HEK293T (cell line): ENCODE measurements at regions of chr21 and their contacts with region 1.

Region 1: DNA sequence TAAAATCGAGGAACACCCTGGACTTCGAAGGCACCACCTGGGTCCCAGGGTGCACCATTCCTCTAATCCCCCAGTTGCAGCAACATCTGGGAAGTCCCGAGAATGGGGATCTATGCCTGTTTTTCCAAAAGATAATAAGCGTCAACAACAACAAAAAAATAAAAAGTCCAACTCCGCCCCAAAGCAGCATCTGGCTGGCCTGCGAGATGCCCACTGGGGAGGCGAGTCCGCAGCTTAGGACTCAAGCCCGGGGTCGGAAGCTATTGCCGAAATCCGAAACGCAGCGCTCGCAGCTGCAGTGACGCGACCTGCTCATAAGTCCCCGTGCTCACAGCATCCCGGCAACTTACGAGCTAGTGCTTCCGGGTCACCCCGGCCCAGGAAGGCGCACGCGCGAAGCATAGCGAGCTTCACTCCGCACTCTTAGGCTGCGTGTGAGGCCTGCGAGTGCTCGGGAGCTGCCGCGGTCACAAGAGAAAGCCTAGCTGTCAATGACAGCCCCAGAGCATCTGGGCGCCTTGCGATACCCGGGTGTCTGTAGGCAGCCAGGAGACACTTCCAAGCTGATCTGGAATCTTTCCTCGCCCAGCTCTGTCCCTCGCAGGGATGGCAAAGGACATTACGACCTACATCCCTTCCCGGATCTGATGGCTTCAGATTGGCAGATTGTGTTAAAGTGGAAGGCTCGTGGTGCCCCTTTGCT is 9.9 kb upstream of the LTN1 start:
- DNase-seq: peak; percentile 98

Region 2: DNA sequence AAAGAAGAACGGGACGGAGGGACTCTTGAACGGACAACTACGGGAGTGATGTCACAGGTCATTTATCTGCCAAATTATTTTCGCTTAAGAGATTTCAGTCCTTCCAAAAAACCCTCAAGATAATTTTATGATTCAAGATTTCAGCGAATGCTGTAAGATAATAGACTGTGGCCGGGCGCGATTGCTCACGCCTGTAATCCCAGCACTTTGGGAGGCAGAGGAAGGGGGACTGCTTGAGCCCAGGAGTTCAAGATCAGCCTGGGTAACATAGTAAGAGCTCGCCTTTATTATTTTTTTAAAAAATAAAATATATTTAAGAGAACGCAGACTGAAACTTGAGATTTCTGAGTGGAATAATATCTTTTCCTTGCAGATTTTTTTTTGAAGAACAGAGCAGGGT is 15.9 kb after region 1 on chr21:
- CTCF ChIA-PET with region 1: no interaction called
- POLR2A ChIA-PET with region 1: interaction called, 65 read pairs
- DNase-seq: no peak

Region 3: DNA sequence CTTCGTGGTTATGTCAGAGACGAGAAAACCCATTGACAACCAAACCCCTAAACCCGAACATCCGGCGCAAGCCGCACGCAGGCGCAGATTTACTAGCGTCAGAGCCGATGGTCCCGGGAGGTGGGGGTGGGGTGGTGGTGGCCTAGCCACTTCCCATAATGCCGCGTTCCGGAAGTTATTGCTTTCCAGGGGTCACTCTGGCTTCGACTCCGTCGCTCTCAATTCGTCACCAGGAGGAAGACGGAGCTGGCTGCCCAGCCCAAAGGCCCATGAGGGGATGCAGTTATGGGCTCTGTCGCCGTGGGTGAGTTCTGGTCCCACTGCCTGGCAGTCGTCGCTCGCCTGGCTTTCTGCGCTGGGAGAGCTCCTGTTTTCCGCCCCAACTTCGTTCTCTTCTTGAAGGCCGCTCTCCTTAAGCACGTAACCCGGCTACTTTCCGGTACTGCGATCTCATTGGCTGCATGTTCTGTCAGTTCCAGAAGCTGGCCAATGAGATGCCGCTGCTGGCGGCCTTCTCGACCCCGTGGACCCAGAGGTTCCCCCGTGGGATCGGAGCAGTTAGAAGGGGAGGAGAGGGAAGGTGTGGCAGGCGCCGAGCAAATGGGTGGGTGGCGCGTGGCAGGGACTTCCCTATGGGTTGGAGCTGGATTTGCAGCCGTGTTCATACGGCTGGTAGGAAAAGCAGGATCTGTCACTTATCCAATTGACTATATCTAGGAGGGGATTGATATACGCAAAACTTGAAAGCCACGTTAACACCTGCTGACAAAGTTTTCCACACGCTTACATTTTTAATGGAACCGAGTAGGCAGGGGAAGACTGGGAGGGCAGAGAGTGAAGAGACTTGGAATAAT is 22.1 kb after region 1 on chr21 and contains the start of gene USP16:
- CTCF ChIA-PET with region 1: no interaction called
- POLR2A ChIA-PET with region 1: interaction called, 65 read pairs
- DNase-seq: peak; percentile 98

Region 4: DNA sequence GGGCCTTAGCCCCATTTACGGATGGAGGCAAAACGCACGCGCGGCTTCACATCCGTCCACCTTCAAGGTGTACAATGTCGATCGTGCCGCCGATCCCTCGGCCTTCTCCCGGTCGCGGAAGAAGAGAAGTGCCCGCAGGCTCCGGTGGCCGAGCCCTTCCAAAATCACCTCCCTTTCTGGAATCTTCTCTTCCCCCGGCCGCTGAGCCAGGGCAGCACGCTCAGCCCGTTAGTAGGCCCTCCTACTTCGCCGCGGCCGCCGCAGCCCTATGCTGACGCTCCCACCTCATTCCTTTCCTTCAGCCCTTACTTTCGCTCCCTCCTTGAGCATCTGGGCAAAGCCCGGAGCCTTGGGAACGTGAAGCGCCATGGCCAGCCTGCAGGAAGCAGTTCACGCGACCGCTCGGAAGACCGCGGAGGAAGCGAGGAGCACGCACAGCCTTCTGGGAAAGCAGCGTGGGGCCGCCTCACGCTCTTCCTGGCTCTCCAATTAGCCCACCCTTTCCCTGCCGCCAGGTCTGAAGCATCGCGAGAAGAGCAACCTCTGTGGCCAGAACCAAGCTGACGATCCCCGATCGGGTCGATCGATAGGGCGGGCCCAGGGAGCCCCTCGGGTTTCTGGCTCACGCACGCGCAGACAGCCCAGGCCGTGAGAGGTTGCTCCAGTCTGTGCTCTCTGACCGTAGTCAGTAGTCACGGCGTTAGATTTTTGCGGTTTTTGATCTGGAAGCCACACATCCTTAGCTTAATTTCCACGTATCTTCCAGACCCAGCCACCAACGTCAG is 70.8 kb after region 1 on chr21 and contains the start of gene CCT8:
- CTCF ChIA-PET with region 1: no interaction called
- POLR2A ChIA-PET with region 1: interaction called, 14 read pairs
- DNase-seq: peak; percentile 100